ENCODE measurements at regions of chr11 and their contacts with region 1.

Region 1: GRCh38 chr11:112219476-112220232 is 6.6 kb upstream of the PTS start:
- DNase-seq: peak; percentile 66 to 84 (median 72)
- ATAC-seq: peak; percentile 99
- H3K4me3 ChIP-seq: no peak overlapping the region
- H3K27ac ChIP-seq: no peak overlapping the region
- H3K4me1 ChIP-seq: peaks cover 0 to 4% of the 10 kb centered on the region in 2 experiments; a peak in 1 of 5 replicates
- H3K27me3 ChIP-seq: no peaks in the 10 kb centered on the region
- CTCF ChIP-seq: peak; percentile 71 to 93 (median 78)
- EP300 ChIP-seq: no peak
- POLR2A ChIP-seq: no peak
- RAD21 ChIP-seq: peak; percentile 92 to 96

Region 2: GRCh38 chr11:112113539-112114457 is 105.9 kb before region 1 on chr11:
- CTCF ChIA-PET with region 1: no interaction called
- POLR2A ChIA-PET with region 1: interaction called, 6 read pairs
- in situ Hi-C with region 1: no loop called
- intact Hi-C with region 1: loop called (anchors 2 kb)
- DNase-seq: peak; percentile 53 to 74 (median 66)
- ATAC-seq: peak; percentile 90
- H3K4me3 ChIP-seq: no peak overlapping the region
- H3K27ac ChIP-seq: no peak overlapping the region
- H3K4me1 ChIP-seq: 0 out of 5 replicates have a peak, but pooled peaks cover 0 to 6% of the 10 kb centered on the region in 2 experiments
- H3K27me3 ChIP-seq: no peaks in the 10 kb centered on the region
- CTCF ChIP-seq: peak; percentile 57 to 72 (median 64); a peak in 4 of 6 replicates
- EP300 ChIP-seq: no peak
- POLR2A ChIP-seq: no peak
- RAD21 ChIP-seq: peak; percentile 46 to 67

Region 3: GRCh38 chr11:112280268-112281126 is 60.8 kb after region 1 on chr11:
- CTCF ChIA-PET with region 1: interaction called, 95 read pairs
- POLR2A ChIA-PET with region 1: interaction called, 4 read pairs
- in situ Hi-C with region 1: loop called (anchors 5 kb)
- intact Hi-C with region 1: loop called (anchors 1 kb)
- DNase-seq: peak; percentile 76 to 87 (median 78)
- ATAC-seq: peak; percentile 94
- H3K4me3 ChIP-seq: peak overlapping the region; percentile 23; the same call in 1 of the 2 replicates
- H3K27ac ChIP-seq: no peak overlapping the region
- H3K4me1 ChIP-seq: peaks cover 18 to 19% of the 10 kb centered on the region in 2 experiments
- H3K27me3 ChIP-seq: peaks cover 0 to 7% of the 10 kb centered on the region in 2 experiments; a peak in 1 of 5 replicates
- CTCF ChIP-seq: peak; percentile 78 to 89 (median 84)
- EP300 ChIP-seq: no peak
- POLR2A ChIP-seq: no peak
- RAD21 ChIP-seq: peak; percentile 72 to 81

Region 4: GRCh38 chr11:112453601-112454577 is 234.2 kb after region 1 on chr11:
- CTCF ChIA-PET with region 1: interaction called, 10 read pairs
- POLR2A ChIA-PET with region 1: no interaction called
- in situ Hi-C with region 1: no loop called
- intact Hi-C with region 1: no loop called
- DNase-seq: peak; percentile 57 to 82 (median 74)
- ATAC-seq: peak; percentile 97
- H3K4me3 ChIP-seq: no peak overlapping the region
- H3K27ac ChIP-seq: no peak overlapping the region
- H3K4me1 ChIP-seq: no peaks in the 10 kb centered on the region
- H3K27me3 ChIP-seq: no peaks in the 10 kb centered on the region
- CTCF ChIP-seq: peak; percentile 64 to 69 (median 66)
- EP300 ChIP-seq: no peak
- POLR2A ChIP-seq: no peak
- RAD21 ChIP-seq: peak in 1 of 2 experiments; percentile 39; a peak in 3 of 4 replicates

Region 5: DNA sequence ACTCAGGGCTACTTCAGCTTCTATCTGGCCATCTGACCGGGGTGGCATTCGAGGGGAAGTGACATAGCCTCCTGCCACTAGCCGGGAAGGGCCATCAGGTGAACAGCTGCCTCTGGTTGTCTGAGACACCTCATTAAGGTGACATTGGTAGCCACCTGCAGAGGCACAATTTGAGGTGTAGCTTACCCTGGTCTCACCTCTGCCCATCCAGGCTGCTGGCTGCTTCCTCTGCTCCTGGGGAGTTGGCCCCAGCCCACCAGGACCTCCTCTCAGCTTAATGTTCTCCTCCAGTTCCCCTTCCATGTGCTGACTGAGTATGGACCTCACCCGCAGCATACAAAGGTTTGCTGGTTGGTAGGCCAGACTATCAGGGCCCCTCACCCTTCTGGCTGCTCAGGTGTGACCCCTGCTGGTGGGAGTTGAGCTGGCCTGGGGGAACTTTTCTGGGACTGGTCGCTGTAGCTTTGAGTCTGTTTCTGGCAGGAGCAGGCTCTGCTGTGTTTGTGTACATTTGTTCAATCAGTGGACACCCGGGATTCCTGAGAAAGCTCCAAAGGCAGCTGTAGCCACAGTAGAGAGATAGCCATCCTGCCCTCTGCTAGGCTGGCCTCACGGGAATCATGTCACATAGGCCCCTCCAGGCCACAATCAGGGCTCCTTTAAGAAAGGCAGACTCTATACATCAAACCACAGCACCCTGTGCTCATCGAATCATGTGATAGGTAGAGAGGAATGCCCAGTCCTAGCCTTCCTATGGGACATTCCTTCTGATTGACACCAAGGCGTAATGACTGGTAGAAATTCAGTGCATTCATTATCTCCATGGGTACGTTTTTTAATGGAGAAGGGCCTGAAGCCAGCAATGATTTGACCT is 336.1 kb after region 1 on chr11:
- CTCF ChIA-PET with region 1: no interaction called
- POLR2A ChIA-PET with region 1: interaction called, 3 read pairs
- in situ Hi-C with region 1: loop called (anchors 10 kb)
- intact Hi-C with region 1: loop called (anchors 5 kb)
- DNase-seq: peak; percentile 55 to 65 (median 59)
- ATAC-seq: peak; percentile 93
- H3K4me3 ChIP-seq: no peak overlapping the region
- H3K27ac ChIP-seq: no peak overlapping the region
- H3K4me1 ChIP-seq: no peaks in the 10 kb centered on the region
- H3K27me3 ChIP-seq: peaks cover 10 to 25% of the 10 kb centered on the region in 2 experiments; a peak in 3 of 5 replicates
- CTCF ChIP-seq: peak; percentile 71 to 85 (median 76)
- EP300 ChIP-seq: no peak
- POLR2A ChIP-seq: no peak
- RAD21 ChIP-seq: peak; percentile 50 to 71

Region 6: GRCh38 chr11:112627588-112628045 is 408.0 kb after region 1 on chr11:
- CTCF ChIA-PET with region 1: no interaction called
- POLR2A ChIA-PET with region 1: no interaction called
- in situ Hi-C with region 1: no loop called
- intact Hi-C with region 1: no loop called
- DNase-seq: no peak
- ATAC-seq: no peak
- H3K4me3 ChIP-seq: no peak overlapping the region
- H3K27ac ChIP-seq: no peak overlapping the region
- H3K4me1 ChIP-seq: no peaks in the 10 kb centered on the region
- H3K27me3 ChIP-seq: no peaks in the 10 kb centered on the region
- CTCF ChIP-seq: no peak
- EP300 ChIP-seq: no peak
- POLR2A ChIP-seq: no peak
- RAD21 ChIP-seq: no peak

Region 7: DNA sequence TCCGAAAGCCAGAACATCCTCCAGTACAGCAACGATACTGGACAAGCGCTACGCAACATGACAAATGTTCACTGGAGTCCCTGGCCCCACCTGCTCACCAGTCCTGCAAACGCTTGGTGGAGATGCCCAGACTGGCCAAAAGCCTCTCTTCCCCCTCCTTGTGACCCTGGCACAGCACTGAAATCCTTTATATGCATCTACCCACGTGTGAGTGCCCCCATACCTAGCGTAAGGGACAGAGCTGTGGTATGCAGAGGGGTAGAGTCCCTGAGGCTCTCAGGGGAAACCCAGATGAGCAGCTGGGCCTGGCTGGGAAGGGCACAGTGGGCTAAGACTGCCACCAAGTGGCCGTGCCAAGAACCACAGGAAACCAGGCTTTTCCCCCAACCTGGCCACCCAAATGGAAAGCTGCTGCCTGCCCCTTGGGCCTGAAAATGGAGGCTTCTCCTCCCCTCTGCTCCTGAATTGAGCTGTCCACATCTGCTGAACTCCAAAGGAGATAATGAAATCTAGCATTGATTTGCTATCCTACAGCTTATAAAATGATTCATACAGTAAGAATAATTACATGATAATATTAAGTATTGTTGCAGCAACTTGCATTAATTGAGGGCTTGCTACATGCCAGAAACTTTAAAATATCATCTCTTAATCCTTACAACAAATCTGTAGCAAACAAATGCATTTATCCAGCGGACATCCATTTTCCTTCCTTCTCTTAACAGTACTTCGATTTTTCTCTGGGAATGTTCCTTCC is 1070.0 kb after region 1 on chr11:
- CTCF ChIA-PET with region 1: interaction called, 3 read pairs
- POLR2A ChIA-PET with region 1: no interaction called
- in situ Hi-C with region 1: no loop called
- intact Hi-C with region 1: loop called (anchors 5 kb)
- DNase-seq: peak; percentile 58 to 71 (median 70)
- ATAC-seq: peak; percentile 97
- H3K4me3 ChIP-seq: no peak overlapping the region
- H3K27ac ChIP-seq: no peak overlapping the region
- H3K4me1 ChIP-seq: no peaks in the 10 kb centered on the region
- H3K27me3 ChIP-seq: peaks cover 2 to 46% of the 10 kb centered on the region in 2 experiments
- CTCF ChIP-seq: peak; percentile 85 to 91 (median 89)
- EP300 ChIP-seq: no peak
- POLR2A ChIP-seq: no peak
- RAD21 ChIP-seq: peak; percentile 86 to 91